PC-9 (cell line): ENCODE measurements at regions of chr12 and their contacts with region 1.

Region 1: GRCh38 chr12:67578976-67579661 is 69.4 kb upstream of the DYRK2 start:
- DNase-seq: no peak
- H3K4me3 ChIP-seq: no peak overlapping the region
- H3K27ac ChIP-seq: no peak overlapping the region
- H3K4me1 ChIP-seq: 0 out of 2 replicates have a peak, but pooled peaks cover 11% of the 10 kb centered on the region
- H3K27me3 ChIP-seq: no peaks in the 10 kb centered on the region
- CTCF ChIP-seq: no peak

Region 2: DNA sequence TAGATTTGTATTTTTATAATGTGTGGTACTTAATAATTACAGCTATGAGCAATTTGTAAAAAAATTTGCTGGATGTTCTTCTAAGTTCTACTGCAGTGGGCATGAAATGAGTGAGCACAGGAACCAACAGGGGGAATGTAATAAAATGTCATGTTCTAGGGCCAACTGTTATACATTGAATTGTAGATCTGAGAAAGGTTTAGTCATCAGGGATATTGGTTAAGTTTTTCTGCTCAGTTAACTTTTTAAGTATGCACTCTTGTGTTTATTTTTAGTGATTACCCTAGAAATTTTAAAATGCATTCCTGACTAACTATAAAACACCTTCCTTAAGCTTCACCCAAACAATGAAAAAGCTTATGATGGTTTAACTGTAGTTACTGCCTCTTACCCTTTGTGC is 208.1 kb before region 1 on chr12:
- CTCF ChIA-PET with region 1: interaction called, 12 read pairs
- POLR2A ChIA-PET with region 1: no interaction called
- intact Hi-C with region 1: no loop called
- DNase-seq: no peak
- H3K4me3 ChIP-seq: no peak overlapping the region
- H3K27ac ChIP-seq: no peak overlapping the region
- H3K4me1 ChIP-seq: no peaks in the 10 kb centered on the region
- H3K27me3 ChIP-seq: no peaks in the 10 kb centered on the region
- CTCF ChIP-seq: no peak

Region 3: DNA sequence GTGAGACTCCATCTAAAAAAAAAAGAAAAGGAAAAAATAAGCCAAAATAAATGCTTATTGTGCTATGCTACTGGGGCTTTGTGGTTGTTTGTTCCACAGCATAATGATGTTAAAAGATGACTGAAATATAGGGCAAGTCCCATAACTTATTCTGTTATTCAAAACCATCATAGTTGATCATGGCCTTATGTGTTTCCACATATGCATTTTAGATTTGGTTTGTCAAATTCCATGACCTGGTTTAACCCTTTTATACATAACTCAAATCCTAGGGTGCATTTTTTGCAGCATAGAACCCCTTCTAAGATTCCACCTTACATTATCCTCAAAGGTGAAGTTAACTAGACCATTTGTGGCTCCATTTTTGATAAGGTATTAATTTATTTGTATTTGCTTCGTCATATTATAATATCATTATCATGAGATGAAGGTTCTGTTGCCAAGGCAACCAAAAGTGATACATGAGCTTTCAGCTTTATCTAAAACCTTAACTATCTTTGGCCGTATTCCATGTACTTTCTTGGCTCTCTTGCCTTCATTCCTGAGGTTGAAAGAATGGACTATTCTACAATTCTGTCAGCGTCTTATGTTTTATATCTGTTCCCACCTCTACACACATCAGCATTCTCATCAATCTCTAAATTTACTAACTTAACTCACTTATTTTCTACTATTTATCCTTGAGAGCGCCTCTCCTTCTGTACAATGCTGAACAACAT is 69.3 kb before region 1 on chr12:
- CTCF ChIA-PET with region 1: no interaction called
- POLR2A ChIA-PET with region 1: no interaction called
- intact Hi-C with region 1: no loop called
- DNase-seq: no peak
- H3K4me3 ChIP-seq: no peak overlapping the region
- H3K27ac ChIP-seq: no peak overlapping the region
- H3K4me1 ChIP-seq: peaks cover 2% of the 10 kb centered on the region; the same call in 1 of the 2 replicates
- H3K27me3 ChIP-seq: no peaks in the 10 kb centered on the region
- CTCF ChIP-seq: no peak

Region 4: GRCh38 chr12:67562513-67563287 is 16.4 kb before region 1 on chr12:
- CTCF ChIA-PET with region 1: no interaction called
- POLR2A ChIA-PET with region 1: no interaction called
- intact Hi-C with region 1: no loop called
- DNase-seq: no peak
- H3K4me3 ChIP-seq: no peak overlapping the region
- H3K27ac ChIP-seq: no peak overlapping the region
- H3K4me1 ChIP-seq: no peaks in the 10 kb centered on the region
- H3K27me3 ChIP-seq: no peaks in the 10 kb centered on the region
- CTCF ChIP-seq: no peak

Region 5: DNA sequence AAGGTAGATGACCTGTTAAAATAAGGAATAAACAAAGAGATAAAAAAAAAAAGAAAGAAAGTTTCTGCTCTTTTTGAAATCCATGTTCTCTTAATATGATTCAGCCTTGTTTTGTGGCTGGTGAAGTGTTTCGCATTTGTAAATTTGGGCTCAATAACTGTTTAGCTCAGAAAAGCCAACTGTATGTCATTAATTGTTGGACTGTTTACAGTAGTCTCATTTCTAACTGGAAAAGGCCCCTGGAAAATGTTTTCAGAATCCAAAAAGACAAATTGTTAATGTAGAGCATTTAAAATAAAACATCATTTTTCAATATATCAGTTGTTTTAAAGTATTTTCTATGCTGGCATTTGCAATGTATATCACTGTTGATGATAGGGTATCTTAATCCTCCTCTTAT is 22.0 kb after region 1 on chr12:
- CTCF ChIA-PET with region 1: no interaction called
- POLR2A ChIA-PET with region 1: interaction called, 20 read pairs
- intact Hi-C with region 1: no loop called
- DNase-seq: no peak
- H3K4me3 ChIP-seq: no peak overlapping the region
- H3K27ac ChIP-seq: no peak overlapping the region
- H3K4me1 ChIP-seq: peaks cover 2% of the 10 kb centered on the region; the same call in 1 of the 2 replicates
- H3K27me3 ChIP-seq: no peaks in the 10 kb centered on the region
- CTCF ChIP-seq: no peak

Region 6: GRCh38 chr12:67681105-67681778 is 102.1 kb after region 1 on chr12:
- CTCF ChIA-PET with region 1: no interaction called
- POLR2A ChIA-PET with region 1: no interaction called
- intact Hi-C with region 1: no loop called
- DNase-seq: no peak
- H3K4me3 ChIP-seq: no peak overlapping the region
- H3K27ac ChIP-seq: no peak overlapping the region
- H3K4me1 ChIP-seq: peaks cover 13% of the 10 kb centered on the region
- H3K27me3 ChIP-seq: no peaks in the 10 kb centered on the region
- CTCF ChIP-seq: no peak